Endothelial cell of umbilical vein (primary cell): ENCODE measurements at regions of chr2 and their contacts with region 1.

Region 1: GRCh38 chr2:58215429-58215828 is 25.7 kb downstream of the FANCL start:
- DNase-seq: peak; percentile 70
- H3K4me3 ChIP-seq: no peak overlapping the region
- H3K27ac ChIP-seq: no peak overlapping the region
- H3K4me1 ChIP-seq: peaks cover 6% of the 10 kb centered on the region
- H3K27me3 ChIP-seq: no peaks in the 10 kb centered on the region
- CTCF ChIP-seq: no peak
- POLR2A ChIP-seq: no peak

Region 2: GRCh38 chr2:58204195-58204959 is 11.1 kb before region 1 on chr2:
- CTCF ChIA-PET with region 1: interaction called, 6 read pairs
- POLR2A ChIA-PET with region 1: no interaction called
- dilution Hi-C with region 1: no loop called
- intact Hi-C with region 1: loop called (anchors 1 kb)
- DNase-seq: peak; percentile 69
- H3K4me3 ChIP-seq: no peak overlapping the region
- H3K27ac ChIP-seq: no peak overlapping the region
- H3K4me1 ChIP-seq: peaks cover 12% of the 10 kb centered on the region
- H3K27me3 ChIP-seq: no peaks in the 10 kb centered on the region
- CTCF ChIP-seq: no peak
- POLR2A ChIP-seq: no peak